ENCODE measurements at regions of chr9 and their contacts with region 1.

Region 1: DNA sequence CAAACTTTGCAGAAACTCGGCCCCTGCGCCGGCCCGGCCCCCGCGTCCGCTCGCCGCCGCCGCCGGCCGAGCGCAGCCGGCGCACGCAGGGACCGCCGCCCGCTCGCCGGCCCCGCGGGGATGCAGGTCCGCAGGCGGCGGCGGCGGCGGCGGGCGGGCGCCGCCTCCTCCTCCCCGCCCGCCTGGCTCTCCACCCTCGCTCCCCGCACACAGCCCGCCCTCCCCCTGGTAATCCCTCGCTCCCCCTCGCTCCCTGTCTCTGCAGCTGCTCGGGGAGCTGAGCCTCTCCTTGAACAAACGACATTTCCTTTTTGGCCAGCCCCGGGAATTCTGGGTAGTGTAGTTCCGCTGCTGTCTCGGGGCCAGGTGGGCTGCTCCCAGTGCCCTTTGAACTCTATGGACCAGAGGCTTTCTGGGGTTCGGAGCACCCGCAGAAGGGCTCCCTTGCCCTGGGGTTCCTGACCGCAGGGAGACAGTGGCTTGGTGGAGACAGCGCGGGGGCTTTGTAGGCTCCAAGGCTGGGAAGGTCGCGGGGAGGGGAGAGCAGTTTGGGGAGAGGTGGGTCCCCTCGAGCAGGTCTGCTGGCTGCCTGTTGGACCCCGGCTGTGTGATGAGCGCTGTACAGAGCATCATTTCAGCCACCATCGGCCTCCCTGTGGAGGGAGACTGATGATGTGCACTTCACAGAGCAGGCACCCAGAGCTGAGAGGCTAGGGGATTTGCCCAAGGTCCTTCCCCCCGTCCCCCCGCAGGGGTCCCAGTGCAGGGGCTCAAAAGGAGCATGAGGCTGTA is 1.8 kb upstream of the FAM78A start:
- DNase-seq: peak; percentile 87
- CTCF ChIP-seq: no peak

Region 2: GRCh38 chr9:131253891-131254491 is 24.1 kb before region 1 on chr9:
- CTCF ChIA-PET with region 1: interaction called, 19 read pairs
- POLR2A ChIA-PET with region 1: interaction called, 4 read pairs
- DNase-seq: peak; percentile 46
- CTCF ChIP-seq: no peak

Region 3: DNA sequence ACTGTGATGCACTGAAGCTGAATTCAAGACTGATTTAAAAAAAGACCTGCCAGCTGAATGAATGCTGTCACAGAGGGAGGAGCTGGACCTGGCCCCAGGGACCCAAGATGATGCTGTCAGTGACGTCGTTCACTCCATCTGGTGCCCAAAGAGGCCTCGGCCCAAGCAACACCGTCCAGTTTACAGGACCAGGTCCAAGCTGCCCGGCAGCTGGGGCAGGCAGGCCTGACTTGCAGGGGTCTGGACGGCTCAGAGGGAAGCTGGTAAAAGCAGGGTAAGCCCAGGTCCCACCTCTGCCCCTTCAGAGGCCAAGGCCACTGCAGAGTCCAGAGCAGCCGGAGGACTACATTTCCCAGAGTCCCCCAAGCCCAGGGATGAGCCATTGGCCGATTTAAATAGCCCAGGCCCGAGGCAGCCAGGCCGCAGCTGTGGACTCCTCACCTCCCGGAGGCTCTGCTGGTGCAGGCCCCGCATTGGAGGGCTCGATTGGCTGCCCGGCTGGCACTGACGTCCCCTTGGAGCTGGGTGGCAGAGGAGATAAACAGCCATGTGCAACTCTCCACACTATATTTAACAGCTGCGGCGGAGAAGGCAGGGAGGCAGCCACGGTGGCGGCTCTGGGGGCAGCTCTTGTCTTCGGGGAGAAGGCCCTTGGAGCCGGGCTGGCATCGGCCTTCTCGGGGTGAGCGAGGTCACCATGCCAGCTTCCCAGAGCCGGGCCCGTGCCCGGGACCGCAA is 11.4 kb after region 1 on chr9 and contains the start of gene PLPP7:
- CTCF ChIA-PET with region 1: interaction called, 10 read pairs
- POLR2A ChIA-PET with region 1: no interaction called
- DNase-seq: peak; percentile 62
- CTCF ChIP-seq: no peak